IMR-90 (cell line): ENCODE measurements at regions of chr12 and their contacts with region 1.

Region 1: GRCh38 chr12:71865166-71865713 is 25.7 kb downstream of the TBC1D15 start:
- DNase-seq: peak; percentile 94
- ATAC-seq: peak; percentile 94
- H3K4me3 ChIP-seq: no peak overlapping the region
- H3K27ac ChIP-seq: peak overlapping the region; percentile 48
- H3K4me1 ChIP-seq: peaks cover 16% of the 10 kb centered on the region
- H3K27me3 ChIP-seq: no peaks in the 10 kb centered on the region
- CTCF ChIP-seq: no peak
- POLR2A ChIP-seq: no peak
- RAD21 ChIP-seq: peak; percentile 28; the same call in 1 of the 2 replicates

Region 2: DNA sequence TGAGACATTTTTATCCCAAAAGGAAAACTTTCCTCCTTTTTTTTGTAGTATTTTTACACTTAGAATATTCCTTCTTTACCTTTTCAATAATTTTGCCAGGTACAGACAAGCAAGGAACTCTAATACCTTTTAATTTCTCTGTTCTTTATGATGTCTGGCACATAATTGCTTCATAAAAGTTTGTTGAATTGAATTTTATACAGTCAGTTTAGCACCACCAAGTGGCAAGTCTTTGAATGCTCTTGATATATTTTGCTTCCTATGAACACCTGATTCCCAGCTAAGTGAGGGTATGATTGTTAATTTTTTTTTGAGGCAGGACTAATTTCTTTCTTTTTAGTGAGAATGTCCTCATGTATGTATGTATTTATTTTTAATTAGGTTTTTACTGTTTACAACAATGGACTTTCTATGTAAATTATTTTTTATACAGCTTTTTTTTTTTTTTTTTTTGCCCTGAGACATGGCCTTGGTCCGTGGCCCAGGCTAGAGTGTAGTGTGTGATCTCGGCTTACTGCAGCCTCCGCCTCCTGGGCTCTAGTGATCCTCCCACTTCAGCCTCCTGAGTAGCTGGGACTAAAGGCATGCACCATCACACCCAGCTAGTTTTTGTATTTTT is 18.8 kb before region 1 on chr12:
- CTCF ChIA-PET with region 1: interaction called, 3 read pairs
- POLR2A ChIA-PET with region 1: no interaction called
- dilution Hi-C with region 1: no loop called
- in situ Hi-C with region 1: no loop called
- intact Hi-C with region 1: loop called (anchors 2 kb)
- DNase-seq: peak; percentile 47
- ATAC-seq: peak; percentile 66
- H3K4me3 ChIP-seq: no peak overlapping the region
- H3K27ac ChIP-seq: no peak overlapping the region
- H3K4me1 ChIP-seq: no peaks in the 10 kb centered on the region
- H3K27me3 ChIP-seq: no peaks in the 10 kb centered on the region
- CTCF ChIP-seq: peak; percentile 61
- POLR2A ChIP-seq: no peak
- RAD21 ChIP-seq: peak; percentile 46

Region 3: GRCh38 chr12:72197790-72198189 is 332.6 kb after region 1 on chr12:
- CTCF ChIA-PET with region 1: no interaction called
- POLR2A ChIA-PET with region 1: no interaction called
- dilution Hi-C with region 1: no loop called
- in situ Hi-C with region 1: no loop called
- intact Hi-C with region 1: no loop called
- DNase-seq: no peak
- ATAC-seq: no peak
- H3K4me3 ChIP-seq: no peak overlapping the region
- H3K27ac ChIP-seq: no peak overlapping the region
- H3K4me1 ChIP-seq: no peaks in the 10 kb centered on the region
- H3K27me3 ChIP-seq: peaks cover 1% of the 10 kb centered on the region; the same call in 1 of the 2 replicates
- CTCF ChIP-seq: no peak
- POLR2A ChIP-seq: no peak
- RAD21 ChIP-seq: no peak